ENCODE measurements at regions of chr6 and their contacts with region 1.

Region 1: GRCh38 chr6:23003671-23004467 is 434.5 kb downstream of the HDGFL1 start:
- DNase-seq: peak in 1 of 2 donors; percentile 48
- ATAC-seq: peak; percentile 69
- H3K4me3 ChIP-seq: peak overlapping the region; percentile 6 to 52
- H3K27ac ChIP-seq: peak overlapping the region in 1 of 2 donors; percentile 42
- H3K4me1 ChIP-seq: peaks cover 0 to 2% of the 10 kb centered on the region in 2 donors
- H3K27me3 ChIP-seq: no peaks in the 10 kb centered on the region

Region 2: GRCh38 chr6:22668307-22668706 is 335.6 kb before region 1 on chr6:
- intact Hi-C with region 1: loop called in 1 of 2 experiments (anchors 5 kb)
- DNase-seq: no peak
- ATAC-seq: no peak
- H3K4me3 ChIP-seq: no peak overlapping the region
- H3K27ac ChIP-seq: no peak overlapping the region
- H3K4me1 ChIP-seq: peaks cover 0 to 2% of the 10 kb centered on the region in 2 donors
- H3K27me3 ChIP-seq: no peaks in the 10 kb centered on the region

Region 3: GRCh38 chr6:22929311-22929985 is 74.4 kb before region 1 on chr6:
- intact Hi-C with region 1: no loop called
- DNase-seq: no peak
- ATAC-seq: no peak
- H3K4me3 ChIP-seq: no peak overlapping the region
- H3K27ac ChIP-seq: peak overlapping the region in 1 of 2 donors; percentile 22
- H3K4me1 ChIP-seq: no peaks in the 10 kb centered on the region
- H3K27me3 ChIP-seq: no peaks in the 10 kb centered on the region

Measured in aorta (tissue), 5 donors.